ENCODE measurements at regions of chr9 and their contacts with region 1.

Region 1: DNA sequence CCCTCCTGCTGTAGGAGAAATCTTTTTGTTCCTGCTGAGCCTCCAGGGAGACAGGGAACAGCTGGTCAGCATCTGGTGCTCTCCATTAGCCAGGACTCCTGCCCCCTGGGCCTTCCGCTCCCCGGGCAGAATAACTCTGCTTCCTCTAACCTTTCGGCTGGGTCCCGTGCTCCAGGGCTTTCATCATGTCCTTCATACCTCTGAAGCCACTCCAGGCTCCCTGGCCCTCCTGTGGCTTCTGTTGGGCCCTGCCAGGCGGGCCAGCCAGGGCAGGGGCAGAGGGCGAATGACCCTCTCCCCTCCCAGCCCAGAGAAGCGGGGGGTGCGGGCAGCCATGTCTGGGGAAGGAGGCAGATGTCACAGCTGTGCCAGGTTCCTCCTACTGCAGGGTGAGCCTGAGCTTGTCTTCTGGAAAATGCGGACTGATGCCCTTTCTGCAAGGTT is 81.7 kb upstream of the LMX1B start:
- DNase-seq: no peak
- ATAC-seq: no peak
- H3K4me3 ChIP-seq: no peak overlapping the region
- H3K4me3 Mint-ChIP-seq: peak overlapping the region; percentile 79
- H3K27ac ChIP-seq: peak overlapping the region in 1 of 2 donors; percentile 18
- H3K27ac Mint-ChIP-seq: peak overlapping the region; percentile 91
- H3K4me1 ChIP-seq: peaks cover 43 to 58% of the 10 kb centered on the region in 2 donors
- H3K4me1 Mint-ChIP-seq: peaks cover 48% of the 10 kb centered on the region
- H3K27me3 ChIP-seq: no peaks in the 10 kb centered on the region
- H3K27me3 Mint-ChIP-seq: no peaks in the 10 kb centered on the region
- CTCF ChIP-seq: no peak

Region 2: DNA sequence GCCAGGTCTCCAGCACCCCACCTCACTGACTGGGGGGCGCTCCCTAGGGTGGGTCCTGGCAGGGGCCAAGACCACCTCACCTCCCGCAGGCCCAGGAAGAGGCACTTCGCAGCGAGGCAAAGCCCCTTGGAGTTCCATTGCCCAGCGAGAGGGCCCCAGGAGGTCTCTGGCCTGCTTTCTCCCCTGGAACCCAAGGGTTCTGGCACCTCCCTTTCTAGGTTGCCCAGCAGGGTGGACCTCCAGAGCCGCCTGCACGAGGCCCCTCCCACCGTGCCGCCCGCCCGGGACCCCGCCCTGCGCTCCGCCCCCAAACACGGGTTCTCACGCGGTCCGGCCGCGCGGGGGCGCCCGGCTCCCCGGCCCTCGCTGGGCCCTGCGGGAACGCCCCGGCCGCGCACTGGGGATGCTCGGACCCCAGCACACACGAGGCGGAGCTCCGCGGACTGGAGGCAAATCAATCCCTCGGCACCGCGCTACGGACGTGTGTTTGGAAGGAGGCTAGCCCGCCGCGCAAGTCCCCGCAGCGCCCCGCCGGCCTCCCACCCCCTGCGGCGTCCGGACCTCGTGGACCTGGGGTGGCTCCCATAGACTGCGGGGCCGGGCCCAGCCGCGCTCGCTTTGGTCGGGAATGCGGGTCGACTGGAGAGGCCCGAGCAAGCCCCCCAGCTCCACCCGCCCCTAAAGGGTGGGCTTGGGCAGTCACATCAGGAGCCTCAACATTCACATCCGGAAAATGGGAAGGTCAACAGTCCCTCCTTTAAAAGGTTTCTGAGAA is 17.8 kb before region 1 on chr9:
- CTCF ChIA-PET with region 1: interaction called, 10 read pairs
- POLR2A ChIA-PET with region 1: interaction called, 10 read pairs
- intact Hi-C with region 1: loop called (anchors 1 kb)
- DNase-seq: peak; percentile 78
- ATAC-seq: peak; percentile 97
- H3K4me3 ChIP-seq: peak overlapping the region in 3 of 5 experiments; percentile 17 to 38 (median 29)
- H3K4me3 Mint-ChIP-seq: peak overlapping the region; percentile 50
- H3K27ac ChIP-seq: no peak overlapping the region
- H3K27ac Mint-ChIP-seq: peak overlapping the region; percentile 32
- H3K4me1 ChIP-seq: peaks cover 24 to 27% of the 10 kb centered on the region in 2 donors
- H3K4me1 Mint-ChIP-seq: peaks cover 26% of the 10 kb centered on the region
- H3K27me3 ChIP-seq: peaks cover 2 to 53% (median 25%) of the 10 kb centered on the region in 4 experiments
- H3K27me3 Mint-ChIP-seq: peaks cover 44% of the 10 kb centered on the region
- CTCF ChIP-seq: peak; percentile 76